Prostate gland (tissue), 2 donors: ENCODE measurements at regions of chr17 and their contacts with region 1.

Region 1: GRCh38 chr17:11701911-11702310 is 103.6 kb downstream of the DNAH9 start:
- DNase-seq: no peak
- H3K4me3 ChIP-seq: no peak overlapping the region
- H3K27ac ChIP-seq: no peak overlapping the region
- H3K4me1 ChIP-seq: no peaks in the 10 kb centered on the region
- H3K27me3 ChIP-seq: no peaks in the 10 kb centered on the region
- CTCF ChIP-seq: no peak
- POLR2A ChIP-seq: no peak

Region 2: GRCh38 chr17:11372692-11373091 is 329.2 kb before region 1 on chr17:
- intact Hi-C with region 1: no loop called
- DNase-seq: no peak
- H3K4me3 ChIP-seq: no peak overlapping the region
- H3K27ac ChIP-seq: no peak overlapping the region
- H3K4me1 ChIP-seq: no peaks in the 10 kb centered on the region
- H3K27me3 ChIP-seq: no peaks in the 10 kb centered on the region
- CTCF ChIP-seq: no peak
- POLR2A ChIP-seq: no peak

Region 3: GRCh38 chr17:11719856-11720255 is 17.9 kb after region 1 on chr17:
- intact Hi-C with region 1: no loop called
- DNase-seq: no peak
- H3K4me3 ChIP-seq: no peak overlapping the region
- H3K27ac ChIP-seq: no peak overlapping the region
- H3K4me1 ChIP-seq: no peaks in the 10 kb centered on the region
- H3K27me3 ChIP-seq: no peaks in the 10 kb centered on the region
- CTCF ChIP-seq: no peak
- POLR2A ChIP-seq: no peak

Region 4: GRCh38 chr17:11742886-11743285 is 41.0 kb after region 1 on chr17:
- intact Hi-C with region 1: loop called (anchors 1 kb)
- DNase-seq: no peak
- H3K4me3 ChIP-seq: no peak overlapping the region
- H3K27ac ChIP-seq: no peak overlapping the region
- H3K4me1 ChIP-seq: no peaks in the 10 kb centered on the region
- H3K27me3 ChIP-seq: no peaks in the 10 kb centered on the region
- CTCF ChIP-seq: no peak
- POLR2A ChIP-seq: no peak

Region 5: GRCh38 chr17:11786711-11787438 is 85.0 kb after region 1 on chr17:
- intact Hi-C with region 1: no loop called
- DNase-seq: no peak
- H3K4me3 ChIP-seq: no peak overlapping the region
- H3K27ac ChIP-seq: no peak overlapping the region
- H3K4me1 ChIP-seq: no peaks in the 10 kb centered on the region
- H3K27me3 ChIP-seq: no peaks in the 10 kb centered on the region
- CTCF ChIP-seq: no peak
- POLR2A ChIP-seq: no peak